ENCODE measurements at regions of chr1 and their contacts with region 1.

Region 1: DNA sequence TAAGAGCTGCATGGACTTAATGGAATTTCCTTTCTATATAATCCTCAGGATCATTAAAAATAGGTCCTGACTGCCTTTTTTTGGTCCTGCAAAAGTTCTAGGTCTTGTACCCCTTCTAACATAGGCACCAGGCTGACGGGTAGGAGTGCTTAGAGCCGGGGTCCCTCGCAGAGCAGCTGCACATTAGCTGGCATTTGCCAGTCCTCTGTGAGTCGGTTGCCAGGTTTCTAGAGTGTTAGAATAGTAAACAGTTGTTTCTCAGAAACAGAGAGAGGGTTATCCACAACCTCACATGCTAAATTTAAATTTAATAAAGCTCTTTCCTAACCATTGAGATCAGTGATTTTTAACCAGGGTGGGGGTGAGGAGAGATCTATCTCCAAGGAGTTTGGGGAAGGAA is 35.4 kb upstream of the HEATR1 start:
- DNase-seq: no peak
- H3K4me3 ChIP-seq: no peak overlapping the region
- H3K27ac ChIP-seq: no peak overlapping the region
- H3K4me1 ChIP-seq: no peaks in the 10 kb centered on the region
- H3K27me3 ChIP-seq: no peaks in the 10 kb centered on the region
- CTCF ChIP-seq: no peak

Region 2: DNA sequence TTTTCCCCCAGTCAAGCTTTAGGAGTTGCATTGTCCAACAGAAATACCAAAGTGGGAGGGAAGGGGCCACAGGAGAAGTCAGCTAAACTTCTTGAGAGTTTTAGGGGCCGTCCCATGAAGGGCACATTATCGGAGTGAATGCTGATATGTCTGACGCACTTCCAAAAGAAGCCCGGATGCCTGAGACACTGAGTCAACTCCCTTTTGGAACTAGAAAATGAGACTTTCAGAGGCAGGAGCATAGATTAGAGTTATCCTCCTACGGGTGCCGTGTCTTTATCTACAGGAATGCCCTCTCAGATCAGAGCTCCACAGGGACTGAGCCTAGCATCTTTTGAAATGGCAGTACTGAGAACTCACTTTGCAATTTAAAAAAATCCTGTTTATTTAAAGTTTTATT is 59.7 kb after region 1 on chr1:
- CTCF ChIA-PET with region 1: no interaction called
- dilution Hi-C with region 1: loop called (anchors 5 kb)
- in situ Hi-C with region 1: no loop called
- intact Hi-C with region 1: no loop called
- DNase-seq: no peak
- H3K4me3 ChIP-seq: no peak overlapping the region
- H3K27ac ChIP-seq: no peak overlapping the region
- H3K4me1 ChIP-seq: no peaks in the 10 kb centered on the region
- H3K27me3 ChIP-seq: peaks cover 4% of the 10 kb centered on the region
- CTCF ChIP-seq: no peak

Region 3: DNA sequence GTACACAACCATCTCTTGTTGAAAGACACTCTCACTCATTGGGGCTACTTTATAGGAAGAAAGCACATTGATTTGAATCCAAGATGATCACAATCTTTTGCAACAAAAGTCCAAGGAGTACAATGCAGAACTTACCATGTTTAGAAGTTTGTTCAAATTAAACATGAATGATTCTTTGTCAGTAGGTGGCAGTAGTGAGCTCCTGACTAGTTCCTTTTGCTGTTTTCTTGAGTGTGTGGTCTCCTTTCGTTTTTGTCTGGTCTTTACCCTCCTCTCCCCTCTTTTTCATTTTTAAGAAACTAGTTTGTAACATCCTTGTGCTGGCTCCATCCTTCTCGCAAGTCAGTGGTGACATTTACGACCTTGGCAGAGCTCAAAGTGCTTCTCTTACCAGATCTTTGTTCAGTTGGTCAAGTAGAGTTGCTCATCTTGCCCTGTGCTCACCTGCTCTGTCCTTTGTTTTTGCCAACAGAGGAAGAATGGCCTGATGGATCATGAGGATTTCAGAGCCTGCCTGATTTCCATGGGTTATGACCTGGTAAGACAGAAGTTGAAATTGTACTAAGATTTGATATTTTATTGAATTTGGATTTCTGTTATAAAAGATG is 119.7 kb after region 1 on chr1:
- CTCF ChIA-PET with region 1: no interaction called
- dilution Hi-C with region 1: no loop called
- in situ Hi-C with region 1: no loop called
- intact Hi-C with region 1: no loop called
- DNase-seq: peak; percentile 16
- H3K4me3 ChIP-seq: no peak overlapping the region
- H3K27ac ChIP-seq: no peak overlapping the region
- H3K4me1 ChIP-seq: no peaks in the 10 kb centered on the region
- H3K27me3 ChIP-seq: no peaks in the 10 kb centered on the region
- CTCF ChIP-seq: peak; percentile 64 to 80

Region 4: GRCh38 chr1:237386362-237387143 is 746.9 kb after region 1 on chr1:
- CTCF ChIA-PET with region 1: no interaction called
- dilution Hi-C with region 1: no loop called
- in situ Hi-C with region 1: loop called (anchors 25 kb)
- intact Hi-C with region 1: no loop called
- DNase-seq: no peak
- H3K4me3 ChIP-seq: no peak overlapping the region
- H3K27ac ChIP-seq: no peak overlapping the region
- H3K4me1 ChIP-seq: no peaks in the 10 kb centered on the region
- H3K27me3 ChIP-seq: no peaks in the 10 kb centered on the region
- CTCF ChIP-seq: peak; percentile 65 to 73

Measured in mammary epithelial cell (primary cell).